GM12878 (cell line): ENCODE measurements at regions of chr18 and their contacts with region 1.

Region 1: GRCh38 chr18:62957885-62958472 is 242.6 kb downstream of the PHLPP1 start:
- DNase-seq: no peak
- ATAC-seq: peak; percentile 99
- H3K4me3 ChIP-seq: no peak overlapping the region
- H3K27ac ChIP-seq: no peak overlapping the region
- H3K4me1 ChIP-seq: no peaks in the 10 kb centered on the region
- H3K27me3 ChIP-seq: no peaks in the 10 kb centered on the region
- CTCF ChIP-seq: peak; percentile 38 to 45 (median 43); a peak in 5 of 6 replicates
- EP300 ChIP-seq: no peak
- POLR2A ChIP-seq: no peak
- RAD21 ChIP-seq: peak; percentile 60

Region 2: GRCh38 chr18:62637807-62638687 is 319.9 kb before region 1 on chr18:
- CTCF ChIA-PET with region 1: interaction called, 37 read pairs
- POLR2A ChIA-PET with region 1: no interaction called
- RAD21 ChIA-PET with region 1: interaction called, 7 read pairs
- SMC1A ChIA-PET with region 1: interaction called, 10 read pairs
- in situ Hi-C with region 1: no loop called
- intact Hi-C with region 1: loop called (anchors 1 kb)
- DNase-seq: no peak
- ATAC-seq: peak; percentile 98
- H3K4me3 ChIP-seq: no peak overlapping the region
- H3K27ac ChIP-seq: no peak overlapping the region
- H3K4me1 ChIP-seq: 0 out of 2 replicates have a peak, but pooled peaks cover 6% of the 10 kb centered on the region
- H3K27me3 ChIP-seq: no peaks in the 10 kb centered on the region
- CTCF ChIP-seq: peak; percentile 74 to 84 (median 82)
- EP300 ChIP-seq: no peak
- POLR2A ChIP-seq: no peak
- RAD21 ChIP-seq: peak; percentile 65

Region 3: GRCh38 chr18:62720766-62721613 is 237.0 kb before region 1 on chr18:
- CTCF ChIA-PET with region 1: interaction called, 57 read pairs
- POLR2A ChIA-PET with region 1: interaction called, 6 read pairs
- RAD21 ChIA-PET with region 1: interaction called, 34 read pairs
- SMC1A ChIA-PET with region 1: interaction called, 10 read pairs
- in situ Hi-C with region 1: loop called (anchors 10 kb)
- intact Hi-C with region 1: no loop called
- DNase-seq: no peak
- ATAC-seq: no peak
- H3K4me3 ChIP-seq: 0 out of 2 replicates have a peak overlapping the region, but pooled peaks have one; percentile 14
- H3K27ac ChIP-seq: no peak overlapping the region
- H3K4me1 ChIP-seq: no peaks in the 10 kb centered on the region
- H3K27me3 ChIP-seq: no peaks in the 10 kb centered on the region
- CTCF ChIP-seq: no peak
- EP300 ChIP-seq: no peak
- POLR2A ChIP-seq: no peak
- RAD21 ChIP-seq: no peak

Region 4: GRCh38 chr18:62944454-62944853 is 13.5 kb before region 1 on chr18:
- CTCF ChIA-PET with region 1: interaction called, 20 read pairs
- POLR2A ChIA-PET with region 1: no interaction called
- RAD21 ChIA-PET with region 1: interaction called, 5 read pairs
- SMC1A ChIA-PET with region 1: interaction called, 7 read pairs
- in situ Hi-C with region 1: no loop called
- intact Hi-C with region 1: no loop called
- DNase-seq: no peak
- ATAC-seq: peak; percentile 34; the same call in 2 of the 3 replicates
- H3K4me3 ChIP-seq: no peak overlapping the region
- H3K27ac ChIP-seq: no peak overlapping the region
- H3K4me1 ChIP-seq: peaks cover 1% of the 10 kb centered on the region; the same call in 1 of the 2 replicates
- H3K27me3 ChIP-seq: no peaks in the 10 kb centered on the region
- CTCF ChIP-seq: peak in 2 of 3 experiments; percentile 7 to 17; a peak in 1 of 6 replicates
- EP300 ChIP-seq: no peak
- POLR2A ChIP-seq: no peak
- RAD21 ChIP-seq: 0 out of 2 replicates have a peak, but pooled peaks have one; percentile 26

Region 5: DNA sequence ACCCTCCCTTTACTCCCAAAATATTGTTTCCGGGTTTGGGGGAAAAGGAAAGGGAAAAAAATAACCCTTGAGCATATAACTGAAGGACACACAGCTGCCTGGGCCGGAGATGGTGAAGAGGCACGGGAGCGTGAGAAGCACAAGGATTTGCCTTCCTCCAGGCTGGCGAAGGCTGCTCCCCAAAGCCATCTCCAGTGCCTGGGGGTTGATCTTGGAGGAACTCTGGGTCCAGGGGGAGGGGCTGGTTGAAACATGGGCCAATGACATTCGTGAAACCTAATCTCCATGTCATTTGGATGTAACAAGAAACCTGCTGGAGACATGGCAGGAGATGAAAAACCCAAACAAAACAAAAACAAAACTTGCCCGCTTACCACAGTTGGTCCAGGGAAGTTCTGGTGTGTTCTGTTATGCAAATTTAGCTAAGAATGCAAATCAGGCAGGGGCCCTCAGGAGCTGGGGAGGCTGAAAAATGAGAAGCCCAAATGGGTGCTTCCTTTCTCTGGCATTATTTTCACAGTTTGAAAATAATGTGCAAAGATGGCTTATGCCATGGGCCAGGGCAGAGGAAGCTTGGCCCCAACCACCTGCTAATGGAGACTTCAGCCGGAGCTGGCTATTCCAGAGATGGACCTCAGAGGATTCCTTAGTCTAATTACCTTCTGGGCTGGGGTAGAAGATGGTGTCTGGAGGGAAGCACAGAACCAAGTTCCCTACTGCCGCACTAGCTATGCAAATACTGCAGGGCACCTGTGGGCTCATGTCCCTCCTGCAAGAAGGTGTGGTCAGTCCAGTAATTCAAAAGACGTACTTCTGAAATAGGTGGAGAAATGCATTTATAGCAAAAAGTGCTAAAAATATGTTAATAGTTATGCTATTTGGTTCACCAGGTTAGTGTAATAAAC is 180.7 kb after region 1 on chr18:
- CTCF ChIA-PET with region 1: no interaction called
- POLR2A ChIA-PET with region 1: no interaction called
- RAD21 ChIA-PET with region 1: no interaction called
- SMC1A ChIA-PET with region 1: no interaction called
- in situ Hi-C with region 1: no loop called
- intact Hi-C with region 1: no loop called
- DNase-seq: peak; percentile 94
- ATAC-seq: peak; percentile 58
- H3K4me3 ChIP-seq: peak overlapping the region; percentile 65
- H3K27ac ChIP-seq: peak overlapping the region; percentile 96
- H3K4me1 ChIP-seq: peaks cover 72% of the 10 kb centered on the region
- H3K27me3 ChIP-seq: no peaks in the 10 kb centered on the region
- CTCF ChIP-seq: no peak
- EP300 ChIP-seq: peak in 1 of 2 experiments; percentile 69; a peak in 1 of 4 replicates
- POLR2A ChIP-seq: peak; percentile 74
- RAD21 ChIP-seq: no peak

Region 6: GRCh38 chr18:63487676-63488075 is 529.7 kb after region 1 on chr18:
- CTCF ChIA-PET with region 1: no interaction called
- POLR2A ChIA-PET with region 1: no interaction called
- RAD21 ChIA-PET with region 1: no interaction called
- SMC1A ChIA-PET with region 1: no interaction called
- in situ Hi-C with region 1: no loop called
- intact Hi-C with region 1: no loop called
- DNase-seq: no peak
- ATAC-seq: no peak
- H3K4me3 ChIP-seq: no peak overlapping the region
- H3K27ac ChIP-seq: no peak overlapping the region
- H3K4me1 ChIP-seq: no peaks in the 10 kb centered on the region
- H3K27me3 ChIP-seq: peaks cover 0 to 2% of the 10 kb centered on the region in 2 experiments; a peak in 1 of 4 replicates
- CTCF ChIP-seq: no peak
- EP300 ChIP-seq: no peak
- POLR2A ChIP-seq: no peak
- RAD21 ChIP-seq: no peak